Tibial artery (tissue), 4 donors: ENCODE measurements at regions of chr10 and their contacts with region 1.

Region 1: GRCh38 chr10:72364239-72364777 is 9.6 kb upstream of the DNAJB12 start:
- DNase-seq: peak; percentile 89 to 95
- H3K4me3 ChIP-seq: peak overlapping the region; percentile 27 to 47
- H3K27ac ChIP-seq: peak overlapping the region; percentile 59 to 70
- H3K4me1 ChIP-seq: peaks cover 0 to 14% (median 13%) of the 10 kb centered on the region in 4 donors
- H3K27me3 ChIP-seq: no peaks in the 10 kb centered on the region
- CTCF ChIP-seq: peak; percentile 94 to 98

Region 2: GRCh38 chr10:72308320-72308987 is 55.9 kb before region 1 on chr10:
- intact Hi-C with region 1: no loop called
- DNase-seq: peak in 1 of 2 donors; percentile 78
- H3K4me3 ChIP-seq: no peak overlapping the region
- H3K27ac ChIP-seq: peak overlapping the region in 1 of 2 donors; percentile 18
- H3K4me1 ChIP-seq: peaks cover 0 to 27% (median 14%) of the 10 kb centered on the region in 4 donors
- H3K27me3 ChIP-seq: no peaks in the 10 kb centered on the region
- CTCF ChIP-seq: no peak

Region 3: DNA sequence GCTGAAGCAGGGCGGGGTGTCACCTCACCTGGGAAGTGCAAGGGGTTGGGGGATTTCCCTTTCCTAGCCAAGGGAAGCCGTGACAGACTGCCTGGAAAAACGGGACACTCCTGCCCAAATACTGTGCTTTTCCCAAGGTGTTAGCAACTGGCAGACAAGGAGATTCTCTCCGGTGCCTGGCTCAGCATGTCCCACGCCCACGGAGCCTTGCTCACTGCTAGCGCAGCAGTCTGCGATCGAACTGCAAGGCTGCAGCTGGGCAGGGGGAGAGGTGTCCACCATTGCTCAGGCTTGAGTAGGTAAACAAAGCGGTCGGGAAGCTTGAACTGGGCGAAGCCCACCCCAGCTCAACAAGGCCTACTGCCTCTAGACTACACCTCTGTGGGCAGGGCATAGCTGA is 71.3 kb after region 1 on chr10:
- intact Hi-C with region 1: no loop called
- DNase-seq: no peak
- H3K4me3 ChIP-seq: no peak overlapping the region
- H3K27ac ChIP-seq: no peak overlapping the region
- H3K4me1 ChIP-seq: no peaks in the 10 kb centered on the region
- H3K27me3 ChIP-seq: no peaks in the 10 kb centered on the region
- CTCF ChIP-seq: no peak

Region 4: DNA sequence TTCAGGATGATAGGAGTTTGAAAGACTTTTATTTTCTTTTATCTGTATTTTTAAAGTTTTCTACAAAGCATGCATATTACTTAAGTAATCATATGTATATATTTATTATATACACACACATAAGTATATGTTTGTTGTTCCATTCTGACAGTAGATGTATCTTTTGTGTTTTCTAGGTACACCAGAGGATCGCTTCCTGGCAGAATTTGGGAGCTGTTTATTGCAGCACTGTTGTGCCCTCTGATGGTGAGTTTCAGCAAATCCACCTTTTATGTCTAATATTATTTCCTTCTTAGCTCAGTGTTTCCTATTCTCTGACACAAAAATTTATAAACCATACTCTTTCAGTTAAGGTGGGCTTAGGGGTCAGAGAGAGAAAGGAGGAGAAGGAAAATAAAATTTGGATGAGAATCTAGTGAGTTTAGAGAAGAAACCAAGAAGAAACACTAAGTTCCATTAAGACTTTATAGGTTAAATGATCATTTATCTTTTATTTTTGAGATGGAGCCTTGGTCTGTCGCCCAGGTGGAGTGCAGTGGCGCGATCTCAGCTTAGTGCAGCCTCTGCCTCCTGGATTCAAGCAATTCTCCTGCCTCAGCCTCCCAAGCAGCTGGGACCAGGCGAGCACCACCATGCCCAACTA is 470.0 kb after region 1 on chr10:
- intact Hi-C with region 1: loop called (anchors 10 kb)
- DNase-seq: peak in 1 of 2 donors; percentile 48
- H3K4me3 ChIP-seq: no peak overlapping the region
- H3K27ac ChIP-seq: no peak overlapping the region
- H3K4me1 ChIP-seq: peaks cover 0 to 39% (median 6%) of the 10 kb centered on the region in 4 donors
- H3K27me3 ChIP-seq: no peaks in the 10 kb centered on the region
- CTCF ChIP-seq: peak; percentile 61 to 85

Region 5: DNA sequence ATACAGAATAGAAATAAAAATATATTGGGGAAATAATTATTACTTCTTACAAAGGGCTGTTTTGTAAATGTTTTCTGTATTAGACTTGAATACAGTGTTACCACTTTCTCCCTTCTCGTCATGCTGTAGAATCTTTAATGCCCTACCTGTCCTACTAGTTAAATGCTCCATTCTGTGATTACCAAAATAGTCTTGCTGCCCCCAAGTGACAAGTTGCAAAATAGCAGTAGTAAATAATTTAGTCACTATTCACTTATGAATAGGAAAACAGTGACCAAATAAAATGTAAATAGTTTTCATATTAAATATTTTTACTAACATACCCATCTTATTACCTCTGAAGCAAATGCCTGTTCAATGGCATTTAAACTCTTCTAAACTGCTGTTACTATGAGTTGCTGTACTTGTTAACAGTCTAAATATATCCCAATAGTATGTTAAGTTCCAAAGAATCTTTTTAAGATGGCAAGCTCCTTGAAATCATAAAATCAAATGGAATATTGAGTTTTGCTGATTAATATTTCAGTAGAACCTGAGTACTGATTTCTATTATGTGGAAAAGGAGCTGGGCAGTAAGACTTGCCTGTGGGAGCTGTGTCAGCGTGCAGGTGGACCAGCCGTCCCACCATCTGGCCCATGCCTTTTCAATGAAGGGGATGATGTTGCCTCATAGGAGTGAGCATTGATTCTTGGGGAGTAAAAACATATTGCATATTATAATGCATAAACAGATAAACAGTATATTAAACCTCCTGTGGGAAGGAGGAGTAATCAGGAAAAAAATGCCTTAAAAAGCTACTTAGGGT is 511.1 kb after region 1 on chr10:
- intact Hi-C with region 1: loop called (anchors 10 kb)
- DNase-seq: no peak
- H3K4me3 ChIP-seq: no peak overlapping the region
- H3K27ac ChIP-seq: no peak overlapping the region
- H3K4me1 ChIP-seq: no peaks in the 10 kb centered on the region
- H3K27me3 ChIP-seq: no peaks in the 10 kb centered on the region
- CTCF ChIP-seq: peak; percentile 37 to 47

Region 6: DNA sequence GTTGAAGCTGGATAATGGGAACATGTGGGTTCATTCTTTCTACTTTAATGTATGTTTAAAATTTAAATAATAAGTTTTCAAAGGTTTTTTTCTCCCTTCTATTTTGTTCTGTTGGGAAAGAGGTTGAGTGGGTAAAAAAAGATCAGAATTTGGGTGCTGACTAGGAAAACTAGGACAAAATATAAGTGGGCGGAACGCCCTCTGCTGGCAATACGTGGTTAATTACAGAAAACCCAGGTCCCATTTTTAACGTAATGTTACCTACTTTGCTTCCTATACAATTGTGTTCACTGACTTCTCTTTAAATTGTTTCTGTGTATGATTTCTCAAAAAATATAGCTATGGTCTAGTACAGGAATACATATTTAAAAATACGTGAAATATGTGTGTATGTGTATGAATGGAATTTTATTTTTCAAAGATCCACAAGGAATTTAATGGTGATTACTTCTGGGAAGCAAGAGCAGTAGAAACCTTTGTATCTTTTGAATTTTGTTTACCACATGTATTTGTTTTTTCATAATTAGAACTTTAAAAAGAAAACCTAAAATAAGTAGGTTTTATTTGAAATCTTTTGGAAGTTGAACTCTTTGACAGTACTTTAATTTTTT is 794.8 kb after region 1 on chr10:
- intact Hi-C with region 1: loop called (anchors 5 kb)
- DNase-seq: peak; percentile 43 to 76
- H3K4me3 ChIP-seq: no peak overlapping the region
- H3K27ac ChIP-seq: no peak overlapping the region
- H3K4me1 ChIP-seq: peaks cover 0 to 27% (median 10%) of the 10 kb centered on the region in 4 donors
- H3K27me3 ChIP-seq: no peaks in the 10 kb centered on the region
- CTCF ChIP-seq: peak; percentile 75 to 76